ENCODE measurements at regions of chr13 and their contacts with region 1.

Region 1: GRCh38 chr13:20940083-20940880 is 37.7 kb upstream of the XPO4 start:
- DNase-seq: no peak
- ATAC-seq: no peak
- H3K4me3 ChIP-seq: no peak overlapping the region
- H3K27ac ChIP-seq: no peak overlapping the region
- H3K4me1 ChIP-seq: no peaks in the 10 kb centered on the region
- H3K27me3 ChIP-seq: no peaks in the 10 kb centered on the region

Region 2: GRCh38 chr13:20840568-20840967 is 99.7 kb before region 1 on chr13:
- intact Hi-C with region 1: no loop called
- DNase-seq: no peak
- ATAC-seq: no peak
- H3K4me3 ChIP-seq: no peak overlapping the region
- H3K27ac ChIP-seq: no peak overlapping the region
- H3K4me1 ChIP-seq: no peaks in the 10 kb centered on the region
- H3K27me3 ChIP-seq: no peaks in the 10 kb centered on the region

Region 3: DNA sequence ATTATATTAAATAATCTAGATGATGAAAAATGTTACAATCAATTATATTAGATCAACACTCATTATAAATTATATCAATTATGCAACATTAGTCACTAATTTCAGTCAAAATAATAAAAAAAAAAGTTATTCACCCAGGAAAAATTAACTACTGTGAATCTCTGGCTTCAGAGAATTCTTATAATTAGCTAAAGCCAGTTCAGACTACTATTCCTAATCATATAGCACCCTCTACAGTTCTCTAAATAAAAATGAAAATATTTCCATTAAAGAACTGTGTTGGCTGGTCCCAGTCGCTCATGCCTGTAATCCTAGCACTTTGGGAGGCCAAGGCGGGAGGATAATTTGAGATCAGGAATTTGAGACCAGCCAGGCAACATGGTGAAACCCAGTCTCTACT is 70.7 kb before region 1 on chr13:
- intact Hi-C with region 1: no loop called
- DNase-seq: no peak
- ATAC-seq: no peak
- H3K4me3 ChIP-seq: no peak overlapping the region
- H3K27ac ChIP-seq: no peak overlapping the region
- H3K4me1 ChIP-seq: no peaks in the 10 kb centered on the region
- H3K27me3 ChIP-seq: no peaks in the 10 kb centered on the region

Region 4: DNA sequence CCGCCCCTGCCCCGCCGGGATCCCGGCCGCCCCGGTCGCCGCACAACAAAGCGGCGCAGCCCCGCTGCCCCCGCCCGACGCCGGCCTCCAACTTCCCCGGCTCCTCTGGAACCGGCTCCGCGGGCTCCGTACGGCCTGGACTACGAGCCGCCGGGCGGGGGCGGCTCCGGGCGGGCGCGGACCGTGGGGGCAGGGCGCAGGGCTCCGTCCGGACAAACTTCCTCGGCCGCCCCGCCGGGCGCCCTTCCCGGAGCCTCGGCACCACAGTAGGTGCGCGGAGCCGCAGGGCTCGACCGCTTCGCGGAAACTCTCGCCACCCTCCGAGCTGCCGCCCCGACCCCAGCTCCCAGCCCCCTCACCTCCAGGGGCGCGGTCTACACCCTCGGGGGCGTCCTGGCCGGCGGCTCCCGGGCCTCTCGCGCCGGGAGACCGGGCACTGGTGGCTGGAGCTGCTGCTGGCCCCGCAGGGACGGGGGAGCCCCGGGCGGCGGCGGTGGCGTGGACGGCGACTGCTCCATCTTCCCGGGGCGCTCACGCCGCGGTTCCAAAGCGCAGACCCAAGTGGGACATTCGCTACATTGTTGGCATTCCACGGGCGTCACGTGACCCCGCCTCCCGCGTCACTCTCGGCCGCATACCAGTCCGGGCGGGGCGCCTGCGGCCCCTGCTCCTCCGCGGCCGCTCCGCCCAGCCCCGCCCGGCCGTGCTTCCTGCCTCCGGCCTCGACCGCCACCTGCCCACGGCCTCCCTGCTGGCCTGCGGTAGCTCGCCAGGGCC is 120.9 kb after region 1 on chr13 and contains the start of gene LATS2:
- intact Hi-C with region 1: loop called in 1 of 2 experiments (anchors 5 kb)
- DNase-seq: peak; percentile 97 to 99
- ATAC-seq: peak; percentile 97
- H3K4me3 ChIP-seq: peak within 1 kb of the TSS; percentile 95 to 98
- H3K27ac ChIP-seq: peak within 1 kb of the TSS; percentile 97 to 99
- H3K4me1 ChIP-seq: no peaks in the 10 kb centered on the region
- H3K27me3 ChIP-seq: no peaks in the 10 kb centered on the region
- total RNA-seq, gene LATS2: 52.9 to 64.6 TPM

Region 5: DNA sequence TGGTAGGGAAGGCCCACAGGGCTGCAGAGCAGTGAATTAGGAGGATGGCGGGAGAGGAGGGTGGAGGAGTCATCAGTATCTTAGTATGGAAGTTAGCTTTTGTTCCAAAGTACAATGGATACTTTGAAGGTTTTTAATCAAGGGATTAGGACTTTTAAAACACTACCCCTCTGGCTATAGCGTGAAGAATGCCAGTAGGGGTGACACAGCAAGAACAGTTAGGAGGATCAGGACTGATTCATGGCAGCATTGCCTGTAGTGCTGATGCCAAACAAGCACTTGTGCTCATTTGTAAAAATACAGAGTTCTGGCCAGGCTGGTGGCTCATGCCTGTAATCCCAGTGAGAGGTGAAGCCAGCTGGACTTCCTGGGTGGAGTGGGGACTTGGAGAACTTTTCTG is 189.8 kb after region 1 on chr13:
- intact Hi-C with region 1: loop called in 1 of 2 experiments (anchors 5 kb)
- DNase-seq: no peak
- ATAC-seq: no peak
- H3K4me3 ChIP-seq: no peak overlapping the region
- H3K27ac ChIP-seq: no peak overlapping the region
- H3K4me1 ChIP-seq: no peaks in the 10 kb centered on the region
- H3K27me3 ChIP-seq: no peaks in the 10 kb centered on the region

Region 6: GRCh38 chr13:21176220-21176982 is 236.1 kb after region 1 on chr13 and contains the starts of genes MRPL57 and SKA3:
- intact Hi-C with region 1: loop called in 1 of 2 experiments (anchors 5 kb)
- DNase-seq: peak; percentile 95 to 97
- ATAC-seq: peak; percentile 98
- H3K4me3 ChIP-seq: peak within 1 kb of the TSS; percentile 40 to 92
- H3K27ac ChIP-seq: peak within 1 kb of the TSS; percentile 34 to 96
- H3K4me1 ChIP-seq: no peaks in the 10 kb centered on the region
- H3K27me3 ChIP-seq: no peaks in the 10 kb centered on the region
- total RNA-seq, gene MRPL57: 8.4 to 10.3 TPM
- total RNA-seq, gene SKA3: 0.91 to 2.3 TPM

Region 7: DNA sequence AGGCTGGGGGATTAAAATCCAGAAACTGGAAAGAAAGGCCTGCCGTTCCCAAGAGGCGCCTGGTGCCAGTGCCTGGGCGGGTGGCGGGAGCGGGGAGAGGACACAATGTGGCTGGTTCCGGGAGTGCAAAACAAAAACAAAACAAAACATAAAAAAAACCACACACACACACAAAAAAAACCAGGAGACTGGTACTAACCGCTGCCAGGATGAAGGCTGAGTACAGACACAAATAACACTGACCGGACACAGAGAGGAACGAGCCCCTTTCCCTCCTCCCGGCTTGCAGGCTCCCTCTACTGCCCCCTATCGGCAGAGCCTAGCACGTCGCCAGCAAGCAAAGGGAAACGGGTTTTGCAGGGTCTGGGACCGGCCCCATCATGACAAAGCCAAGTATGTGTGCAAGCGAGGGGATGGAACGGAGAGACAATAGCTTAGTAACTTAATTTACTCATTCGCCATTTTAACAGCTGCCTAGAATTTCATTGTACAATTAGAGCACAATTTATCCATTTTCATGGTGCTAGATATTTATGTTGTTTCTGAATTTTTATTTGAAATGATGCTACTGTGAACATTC is 536.7 kb after region 1 on chr13:
- intact Hi-C with region 1: loop called (anchors 2 to 5 kb)
- DNase-seq: peak; percentile 88 to 91
- ATAC-seq: peak; percentile 91
- H3K4me3 ChIP-seq: peak overlapping the region; percentile 2 to 11
- H3K27ac ChIP-seq: no peak overlapping the region
- H3K4me1 ChIP-seq: no peaks in the 10 kb centered on the region
- H3K27me3 ChIP-seq: no peaks in the 10 kb centered on the region